GM12878 (cell line): ENCODE measurements at regions of chr6 and their contacts with region 1.

Region 1: DNA sequence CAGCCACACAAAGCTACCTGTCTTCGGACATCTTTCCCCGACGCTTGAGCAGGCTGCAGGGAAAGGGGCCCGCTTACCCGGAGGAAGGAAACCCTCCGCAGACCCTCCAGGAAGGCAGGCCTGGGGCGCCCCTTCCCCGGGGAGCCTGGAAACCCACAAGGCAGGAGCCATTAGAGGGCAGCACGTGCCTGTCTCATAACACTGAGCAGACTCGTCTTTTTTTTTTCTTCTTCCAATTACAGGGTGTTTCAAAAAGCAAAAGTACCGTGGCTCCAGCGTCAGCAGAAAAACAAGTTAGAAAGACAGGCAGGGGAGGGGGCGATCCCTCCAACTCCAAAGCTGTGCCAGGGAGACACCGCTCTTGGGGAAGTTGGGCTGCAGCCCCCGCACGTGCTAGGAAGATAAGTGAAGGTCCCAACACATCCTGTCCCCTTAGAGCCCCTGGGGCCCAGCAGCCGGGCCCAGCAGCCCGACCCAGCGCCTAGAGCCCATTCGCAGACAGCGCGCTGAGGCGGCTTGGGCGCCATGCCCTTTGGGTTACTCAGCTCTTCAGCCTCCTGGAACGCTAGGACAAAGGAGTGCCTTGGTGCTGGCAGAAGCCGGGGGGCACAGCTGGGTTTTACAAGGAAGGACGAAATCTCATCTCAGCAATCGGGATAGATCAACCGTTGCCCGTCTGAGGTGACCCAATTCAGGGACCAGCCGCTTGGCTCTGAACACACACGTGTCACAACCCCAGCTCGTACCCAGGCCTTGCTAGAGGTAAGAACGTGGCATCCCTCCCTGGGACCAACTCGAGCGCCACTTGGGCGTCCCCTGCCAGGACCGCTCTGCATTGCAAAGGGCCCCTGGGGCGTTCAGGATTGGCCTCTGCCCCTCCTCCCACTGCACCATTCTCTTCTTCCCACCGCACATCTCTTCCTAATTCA is 136.3 kb downstream of the LY86 start:
- DNase-seq: no peak
- ATAC-seq: peak; percentile 91
- H3K4me3 ChIP-seq: peak overlapping the region; percentile 37; the same call in 1 of the 2 replicates
- H3K27ac ChIP-seq: no peak overlapping the region
- H3K4me1 ChIP-seq: peaks cover 11% of the 10 kb centered on the region
- H3K27me3 ChIP-seq: no peaks in the 10 kb centered on the region
- CTCF ChIP-seq: peak; percentile 65 to 82 (median 70)
- EP300 ChIP-seq: no peak
- POLR2A ChIP-seq: no peak
- RAD21 ChIP-seq: peak; percentile 87

Region 2: GRCh38 chr6:6599468-6599873 is 125.3 kb before region 1 on chr6:
- CTCF ChIA-PET with region 1: no interaction called
- POLR2A ChIA-PET with region 1: no interaction called
- RAD21 ChIA-PET with region 1: no interaction called
- SMC1A ChIA-PET with region 1: no interaction called
- in situ Hi-C with region 1: no loop called
- intact Hi-C with region 1: no loop called
- DNase-seq: no peak
- ATAC-seq: no peak
- H3K4me3 ChIP-seq: no peak overlapping the region
- H3K27ac ChIP-seq: no peak overlapping the region
- H3K4me1 ChIP-seq: no peaks in the 10 kb centered on the region; the same call in 1 of the 2 replicates
- H3K27me3 ChIP-seq: no peaks in the 10 kb centered on the region
- CTCF ChIP-seq: no peak
- EP300 ChIP-seq: no peak
- POLR2A ChIP-seq: no peak
- RAD21 ChIP-seq: no peak

Region 3: GRCh38 chr6:6696867-6697531 is 27.8 kb before region 1 on chr6:
- CTCF ChIA-PET with region 1: interaction called, 13 read pairs
- POLR2A ChIA-PET with region 1: interaction called, 3 read pairs
- RAD21 ChIA-PET with region 1: no interaction called
- SMC1A ChIA-PET with region 1: interaction called, 6 read pairs
- in situ Hi-C with region 1: no loop called
- intact Hi-C with region 1: no loop called
- DNase-seq: no peak
- ATAC-seq: peak; percentile 71
- H3K4me3 ChIP-seq: no peak overlapping the region
- H3K27ac ChIP-seq: no peak overlapping the region
- H3K4me1 ChIP-seq: no peaks in the 10 kb centered on the region
- H3K27me3 ChIP-seq: no peaks in the 10 kb centered on the region; a peak in 1 of 4 replicates
- CTCF ChIP-seq: peak; percentile 53 to 80 (median 66)
- EP300 ChIP-seq: no peak
- POLR2A ChIP-seq: no peak
- RAD21 ChIP-seq: peak; percentile 75

Region 4: DNA sequence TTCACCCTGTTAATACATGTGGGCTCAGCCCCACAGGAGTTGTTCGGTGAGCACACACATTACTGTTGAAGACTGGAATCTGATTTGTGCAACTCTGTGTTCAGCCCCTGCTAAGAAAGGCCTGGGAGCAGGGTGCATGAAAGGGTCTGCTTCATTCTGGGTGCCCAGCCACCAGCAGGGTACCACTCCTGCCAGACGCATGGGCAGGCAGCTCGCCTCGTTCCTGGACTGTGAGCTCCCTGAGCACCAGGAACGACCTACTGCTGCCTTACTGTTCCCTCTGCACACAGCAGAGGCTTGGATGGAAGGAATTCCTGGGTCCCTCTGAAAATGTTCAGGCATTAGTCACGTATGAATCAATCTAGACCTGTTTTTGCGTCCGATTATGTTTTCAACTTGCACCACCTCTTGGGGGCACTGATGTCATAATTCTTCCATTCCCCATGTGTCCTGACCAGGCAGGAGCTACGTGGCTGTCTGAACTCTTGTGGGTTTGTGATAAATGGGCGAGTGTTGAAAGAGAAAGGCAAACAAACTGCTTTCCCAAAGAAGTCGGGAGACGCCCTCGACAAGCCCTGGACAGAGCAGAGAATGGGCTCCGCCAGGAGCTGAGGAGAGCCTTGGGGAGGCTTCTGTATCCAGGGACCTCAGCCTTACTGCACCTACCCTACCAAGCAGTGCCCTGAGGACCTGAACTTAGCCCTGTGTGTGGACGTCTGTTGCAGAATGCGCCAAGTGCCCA is 12.4 kb before region 1 on chr6:
- CTCF ChIA-PET with region 1: interaction called, 7 read pairs
- POLR2A ChIA-PET with region 1: no interaction called
- RAD21 ChIA-PET with region 1: no interaction called
- SMC1A ChIA-PET with region 1: interaction called, 10 read pairs
- in situ Hi-C with region 1: no loop called
- intact Hi-C with region 1: no loop called
- DNase-seq: no peak
- ATAC-seq: peak; percentile 25; the same call in 2 of the 3 replicates
- H3K4me3 ChIP-seq: no peak overlapping the region
- H3K27ac ChIP-seq: 0 out of 2 replicates have a peak overlapping the region, but pooled peaks have one; percentile 10
- H3K4me1 ChIP-seq: peaks cover 23% of the 10 kb centered on the region
- H3K27me3 ChIP-seq: no peaks in the 10 kb centered on the region
- CTCF ChIP-seq: peak in 1 of 3 experiments; percentile 11; a peak in 1 of 6 replicates
- EP300 ChIP-seq: no peak
- POLR2A ChIP-seq: no peak
- RAD21 ChIP-seq: 0 out of 2 replicates have a peak, but pooled peaks have one; percentile 23

Region 5: GRCh38 chr6:7080311-7080710 is 355.5 kb after region 1 on chr6:
- CTCF ChIA-PET with region 1: no interaction called
- POLR2A ChIA-PET with region 1: no interaction called
- RAD21 ChIA-PET with region 1: no interaction called
- SMC1A ChIA-PET with region 1: no interaction called
- in situ Hi-C with region 1: no loop called
- intact Hi-C with region 1: no loop called
- DNase-seq: no peak
- ATAC-seq: no peak
- H3K4me3 ChIP-seq: no peak overlapping the region
- H3K27ac ChIP-seq: no peak overlapping the region
- H3K4me1 ChIP-seq: no peaks in the 10 kb centered on the region
- H3K27me3 ChIP-seq: no peaks in the 10 kb centered on the region
- CTCF ChIP-seq: no peak
- EP300 ChIP-seq: no peak
- POLR2A ChIP-seq: no peak
- RAD21 ChIP-seq: no peak

Region 6: GRCh38 chr6:7615611-7616383 is 891.0 kb after region 1 on chr6:
- CTCF ChIA-PET with region 1: interaction called, 4 read pairs
- POLR2A ChIA-PET with region 1: no interaction called
- RAD21 ChIA-PET with region 1: no interaction called
- SMC1A ChIA-PET with region 1: no interaction called
- in situ Hi-C with region 1: loop called (anchors 10 kb)
- intact Hi-C with region 1: loop called (anchors 5 kb)
- DNase-seq: no peak
- ATAC-seq: peak; percentile 57
- H3K4me3 ChIP-seq: no peak overlapping the region
- H3K27ac ChIP-seq: no peak overlapping the region
- H3K4me1 ChIP-seq: peaks cover 5% of the 10 kb centered on the region; the same call in 1 of the 2 replicates
- H3K27me3 ChIP-seq: no peaks in the 10 kb centered on the region
- CTCF ChIP-seq: peak; percentile 72 to 83 (median 75)
- EP300 ChIP-seq: no peak
- POLR2A ChIP-seq: no peak
- RAD21 ChIP-seq: peak; percentile 92